Endothelial cell of umbilical vein (primary cell): ENCODE measurements at regions of chr1 and their contacts with region 1.

Region 1: GRCh38 chr1:24847995-24848881 is 81.8 kb downstream of the RUNX3 start:
- DNase-seq: peak; percentile 90
- H3K4me3 ChIP-seq: peak overlapping the region; percentile 31 to 43 (median 42)
- H3K27ac ChIP-seq: peak overlapping the region; percentile 74
- H3K4me1 ChIP-seq: peaks cover 23% of the 10 kb centered on the region
- H3K27me3 ChIP-seq: no peaks in the 10 kb centered on the region
- CTCF ChIP-seq: peak; percentile 95 to 98
- POLR2A ChIP-seq: peak; percentile 53

Region 2: GRCh38 chr1:24779689-24780464 is 68.4 kb before region 1 on chr1:
- CTCF ChIA-PET with region 1: no interaction called
- POLR2A ChIA-PET with region 1: no interaction called
- dilution Hi-C with region 1: no loop called
- intact Hi-C with region 1: no loop called
- DNase-seq: no peak
- H3K4me3 ChIP-seq: no peak overlapping the region
- H3K27ac ChIP-seq: no peak overlapping the region
- H3K4me1 ChIP-seq: peaks cover 2% of the 10 kb centered on the region
- H3K27me3 ChIP-seq: no peaks in the 10 kb centered on the region
- CTCF ChIP-seq: no peak
- POLR2A ChIP-seq: no peak

Region 3: GRCh38 chr1:24860811-24861231 is 12.6 kb after region 1 on chr1:
- CTCF ChIA-PET with region 1: interaction called, 10 read pairs
- POLR2A ChIA-PET with region 1: no interaction called
- dilution Hi-C with region 1: no loop called
- intact Hi-C with region 1: no loop called
- DNase-seq: no peak
- H3K4me3 ChIP-seq: no peak overlapping the region
- H3K27ac ChIP-seq: no peak overlapping the region
- H3K4me1 ChIP-seq: peaks cover 5% of the 10 kb centered on the region
- H3K27me3 ChIP-seq: no peaks in the 10 kb centered on the region
- CTCF ChIP-seq: no peak
- POLR2A ChIP-seq: no peak

Region 4: GRCh38 chr1:24909388-24909898 is 61.2 kb after region 1 on chr1:
- CTCF ChIA-PET with region 1: interaction called, 30 read pairs
- POLR2A ChIA-PET with region 1: no interaction called
- dilution Hi-C with region 1: no loop called
- intact Hi-C with region 1: loop called (anchors 1 kb)
- DNase-seq: peak; percentile 69
- H3K4me3 ChIP-seq: no peak overlapping the region
- H3K27ac ChIP-seq: no peak overlapping the region
- H3K4me1 ChIP-seq: no peaks in the 10 kb centered on the region
- H3K27me3 ChIP-seq: no peaks in the 10 kb centered on the region
- CTCF ChIP-seq: peak; percentile 59 to 79
- POLR2A ChIP-seq: no peak

Region 5: DNA sequence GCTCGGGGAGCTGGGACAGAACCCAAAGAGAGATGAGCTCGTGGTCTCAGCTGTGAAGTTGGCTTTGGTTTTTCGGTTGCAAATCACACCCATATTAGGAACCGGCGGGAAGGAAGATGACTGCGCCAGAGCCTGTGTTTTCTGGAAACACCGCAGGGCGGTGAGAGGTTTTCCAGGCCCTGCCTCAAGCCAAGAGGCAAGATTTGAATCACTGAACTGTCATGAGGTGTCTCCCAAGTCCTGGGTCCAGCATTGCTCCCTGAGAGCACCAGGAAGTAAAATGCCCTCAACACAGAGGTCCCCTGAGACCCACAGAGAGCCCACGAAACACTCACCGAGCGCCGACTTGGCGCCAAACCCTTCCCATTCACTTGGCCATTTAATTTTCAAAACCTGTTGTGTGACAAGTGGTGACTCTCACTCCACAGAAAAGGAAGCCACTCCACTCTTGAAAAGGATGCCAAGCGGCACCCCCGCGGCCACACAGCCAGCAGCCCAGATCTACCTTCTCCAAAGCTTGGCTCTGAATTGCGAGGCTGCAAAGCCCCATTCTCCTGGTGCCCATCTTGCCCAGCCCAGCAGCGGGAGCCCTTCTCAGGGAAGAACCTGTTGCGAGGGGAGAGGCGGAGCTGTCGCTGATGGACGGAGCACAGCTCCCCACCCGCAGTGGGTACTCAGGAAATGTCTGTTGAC is 180.8 kb after region 1 on chr1:
- CTCF ChIA-PET with region 1: no interaction called
- POLR2A ChIA-PET with region 1: no interaction called
- dilution Hi-C with region 1: no loop called
- intact Hi-C with region 1: no loop called
- DNase-seq: no peak
- H3K4me3 ChIP-seq: no peak overlapping the region
- H3K27ac ChIP-seq: no peak overlapping the region
- H3K4me1 ChIP-seq: no peaks in the 10 kb centered on the region
- H3K27me3 ChIP-seq: no peaks in the 10 kb centered on the region
- CTCF ChIP-seq: no peak
- POLR2A ChIP-seq: no peak

Region 6: DNA sequence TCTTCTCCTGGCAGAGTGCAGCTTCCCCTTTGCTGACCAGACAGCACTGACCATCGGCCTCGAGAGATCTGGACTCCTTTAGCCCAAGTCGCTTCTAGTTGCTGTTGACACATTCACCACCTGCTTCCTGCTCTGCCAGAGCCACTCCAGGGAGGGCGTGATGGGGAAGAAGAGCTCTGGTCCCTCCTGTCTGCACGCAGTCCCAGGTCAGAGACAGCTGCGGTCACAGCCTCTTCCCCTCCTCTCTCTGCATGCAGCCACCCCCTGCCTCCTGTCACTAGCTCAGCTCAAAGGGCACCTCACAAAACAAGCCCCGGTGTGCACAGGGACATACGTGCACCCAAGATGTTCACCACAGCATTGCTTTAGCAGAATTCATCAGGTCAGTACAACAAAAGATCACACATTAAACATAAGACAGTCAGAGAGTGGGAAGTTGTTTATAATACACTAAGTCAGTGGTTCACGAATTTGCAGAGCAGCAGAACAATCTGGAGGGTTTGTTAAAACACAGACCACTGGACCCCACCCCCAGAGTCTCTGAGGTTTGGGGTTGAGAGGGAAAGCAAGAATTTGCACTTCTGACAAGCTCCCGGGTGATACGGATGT is 251.2 kb after region 1 on chr1:
- CTCF ChIA-PET with region 1: interaction called, 6 read pairs
- POLR2A ChIA-PET with region 1: interaction called, 6 read pairs
- dilution Hi-C with region 1: no loop called
- intact Hi-C with region 1: loop called (anchors 1 kb)
- DNase-seq: no peak
- H3K4me3 ChIP-seq: no peak overlapping the region
- H3K27ac ChIP-seq: no peak overlapping the region
- H3K4me1 ChIP-seq: peaks cover 6% of the 10 kb centered on the region
- H3K27me3 ChIP-seq: peaks cover 0 to 2% of the 10 kb centered on the region in 2 experiments
- CTCF ChIP-seq: no peak
- POLR2A ChIP-seq: no peak

Region 7: GRCh38 chr1:25109531-25109951 is 261.3 kb after region 1 on chr1:
- CTCF ChIA-PET with region 1: no interaction called
- POLR2A ChIA-PET with region 1: no interaction called
- dilution Hi-C with region 1: no loop called
- intact Hi-C with region 1: no loop called
- DNase-seq: no peak
- H3K4me3 ChIP-seq: no peak overlapping the region
- H3K27ac ChIP-seq: no peak overlapping the region
- H3K4me1 ChIP-seq: no peaks in the 10 kb centered on the region
- H3K27me3 ChIP-seq: peaks cover 0 to 1% of the 10 kb centered on the region in 2 experiments
- CTCF ChIP-seq: no peak
- POLR2A ChIP-seq: no peak